AG04449 (cell line): ENCODE measurements at regions of chr17 and their contacts with region 1.

Region 1: GRCh38 chr17:4304417-4305027 is 40.7 kb upstream of the ANKFY1 start:
- DNase-seq: no peak
- H3K4me3 ChIP-seq: no peak overlapping the region
- CTCF ChIP-seq: peak; percentile 60

Region 2: DNA sequence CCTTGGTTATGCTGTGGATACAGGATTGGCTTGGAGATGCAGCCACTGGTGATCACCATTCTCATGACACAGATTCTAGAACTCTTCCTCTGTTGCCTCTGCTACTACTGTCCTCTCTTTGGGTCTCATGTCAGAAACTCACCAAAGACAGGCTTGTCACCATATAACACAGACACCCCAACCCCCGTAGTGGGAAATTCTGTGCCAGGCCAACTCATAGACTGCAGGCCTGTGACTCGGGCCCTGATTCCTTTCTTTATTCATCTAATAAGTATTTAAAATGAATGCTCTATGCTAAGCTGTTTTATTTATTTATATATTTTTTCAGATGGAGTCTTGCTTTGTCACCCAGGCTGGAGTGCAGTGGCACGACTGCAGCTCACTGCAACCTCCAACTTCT is 152.1 kb before region 1 on chr17:
- CTCF ChIA-PET with region 1: no interaction called
- POLR2A ChIA-PET with region 1: no interaction called
- DNase-seq: peak; percentile 29
- H3K4me3 ChIP-seq: no peak overlapping the region
- CTCF ChIP-seq: no peak

Region 3: DNA sequence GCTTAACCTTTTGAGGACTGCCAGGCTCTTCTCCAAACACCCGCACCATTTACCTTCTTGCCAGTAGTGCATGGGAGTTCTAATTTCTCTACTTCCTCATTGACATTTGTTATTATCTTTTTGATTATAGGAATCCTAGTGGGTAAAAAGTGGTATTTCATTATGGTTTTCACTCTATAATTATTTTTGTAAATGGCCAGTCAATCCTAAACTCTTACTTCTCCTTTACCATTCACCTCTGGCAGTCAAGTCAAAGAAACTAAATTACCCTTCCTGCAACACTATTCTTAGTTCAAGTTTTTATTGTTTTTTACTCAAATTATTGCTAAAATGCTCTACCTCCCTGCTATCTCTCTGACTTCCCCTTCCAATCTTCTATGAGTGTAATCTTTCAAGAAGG is 10.9 kb before region 1 on chr17:
- CTCF ChIA-PET with region 1: interaction called, 35 read pairs
- POLR2A ChIA-PET with region 1: no interaction called
- DNase-seq: no peak
- H3K4me3 ChIP-seq: no peak overlapping the region
- CTCF ChIP-seq: no peak

Region 4: DNA sequence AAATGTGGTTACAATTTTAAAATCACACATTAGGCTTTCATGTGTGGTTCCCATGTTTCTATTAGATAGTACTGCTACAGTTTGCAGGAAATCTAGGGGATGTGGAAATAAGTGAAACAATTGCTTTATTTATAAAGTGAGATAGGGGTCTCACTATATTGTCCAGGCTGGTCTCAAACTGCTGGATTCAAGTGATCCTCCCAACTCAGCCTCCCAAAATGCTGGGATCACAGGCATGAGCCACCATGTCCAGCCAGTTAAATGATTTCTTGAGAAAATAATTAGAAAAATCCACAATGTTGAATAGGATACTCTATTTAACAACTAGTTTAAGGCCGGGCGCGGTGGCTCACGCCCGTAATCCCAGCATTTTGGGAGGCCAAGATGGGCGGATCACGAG is 19.9 kb after region 1 on chr17:
- CTCF ChIA-PET with region 1: interaction called, 15 read pairs
- POLR2A ChIA-PET with region 1: no interaction called
- DNase-seq: no peak
- H3K4me3 ChIP-seq: no peak overlapping the region
- CTCF ChIP-seq: no peak